ENCODE measurements at regions of chr16 and their contacts with region 1.

Region 1: DNA sequence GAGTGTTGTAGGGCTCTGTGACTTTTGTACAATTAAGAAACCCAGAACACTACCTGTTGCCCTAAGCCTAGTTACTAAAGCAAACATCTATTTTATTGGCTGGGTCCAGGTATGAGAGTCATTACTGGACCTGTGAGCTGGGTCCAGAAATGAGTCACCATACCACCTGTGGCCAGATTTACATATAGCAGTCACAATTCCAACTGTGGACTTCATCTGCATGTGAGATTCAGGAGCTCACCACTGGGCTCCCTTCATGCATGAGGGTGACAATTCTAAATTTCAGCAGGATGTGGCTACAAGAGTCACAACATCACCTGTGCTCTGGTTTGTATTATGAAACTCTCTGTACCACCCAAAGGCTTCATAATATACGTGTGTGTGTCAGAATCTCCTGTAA is 2038.0 kb downstream of the TP53TG3F start:
- DNase-seq: no peak
- H3K4me3 Mint-ChIP-seq: no peak overlapping the region
- H3K27ac Mint-ChIP-seq: no peak overlapping the region
- H3K4me1 Mint-ChIP-seq: no peaks in the 10 kb centered on the region
- H3K27me3 Mint-ChIP-seq: no peaks in the 10 kb centered on the region
- CTCF ChIP-seq: no peak

Region 2: GRCh38 chr16:35533683-35534082 is 36.3 kb after region 1 on chr16:
- CTCF ChIA-PET with region 1: no interaction called
- intact Hi-C with region 1: loop called (anchors 5 kb)
- DNase-seq: no peak
- H3K4me3 Mint-ChIP-seq: no peak overlapping the region
- H3K27ac Mint-ChIP-seq: no peak overlapping the region
- H3K4me1 Mint-ChIP-seq: no peaks in the 10 kb centered on the region
- H3K27me3 Mint-ChIP-seq: no peaks in the 10 kb centered on the region
- CTCF ChIP-seq: no peak